PC-9 (cell line): ENCODE measurements at regions of chr5 and their contacts with region 1.

Region 1: GRCh38 chr5:54517174-54518092 is at the start of gene SNX18:
- DNase-seq: peak; percentile 72 to 88
- H3K4me3 ChIP-seq: peak within 1 kb of the TSS; percentile 72
- H3K27ac ChIP-seq: peak within 1 kb of the TSS; percentile 31; the same call in 1 of the 2 replicates
- H3K4me1 ChIP-seq: peaks cover 40% of the 10 kb centered on the region
- H3K27me3 ChIP-seq: no peaks in the 10 kb centered on the region
- CTCF ChIP-seq: peak; percentile 90
- total RNA-seq, gene SNX18: 9.7 and 13.1 TPM in 2 replicates

Region 2: GRCh38 chr5:53425598-53426511 is 1091.6 kb before region 1 on chr5:
- CTCF ChIA-PET with region 1: no interaction called
- POLR2A ChIA-PET with region 1: no interaction called
- intact Hi-C with region 1: no loop called
- DNase-seq: no peak
- H3K4me3 ChIP-seq: no peak overlapping the region
- H3K27ac ChIP-seq: no peak overlapping the region
- H3K4me1 ChIP-seq: 0 out of 2 replicates have a peak, but pooled peaks cover 6% of the 10 kb centered on the region
- H3K27me3 ChIP-seq: no peaks in the 10 kb centered on the region
- CTCF ChIP-seq: peak; percentile 45

Region 3: GRCh38 chr5:54700986-54701584 is 183.7 kb after region 1 on chr5:
- CTCF ChIA-PET with region 1: no interaction called
- POLR2A ChIA-PET with region 1: no interaction called
- intact Hi-C with region 1: loop called (anchors 1 kb)
- DNase-seq: peak; percentile 79 to 100
- H3K4me3 ChIP-seq: peak overlapping the region; percentile 30; the same call in 1 of the 2 replicates
- H3K27ac ChIP-seq: peak overlapping the region; percentile 90
- H3K4me1 ChIP-seq: peaks cover 44% of the 10 kb centered on the region
- H3K27me3 ChIP-seq: no peaks in the 10 kb centered on the region
- CTCF ChIP-seq: no peak

Region 4: GRCh38 chr5:54844905-54845566 is 327.6 kb after region 1 on chr5:
- CTCF ChIA-PET with region 1: interaction called, 7 read pairs
- POLR2A ChIA-PET with region 1: no interaction called
- intact Hi-C with region 1: loop called (anchors 1 kb)
- DNase-seq: peak in 1 of 2 experiments; percentile 42
- H3K4me3 ChIP-seq: no peak overlapping the region
- H3K27ac ChIP-seq: no peak overlapping the region
- H3K4me1 ChIP-seq: no peaks in the 10 kb centered on the region
- H3K27me3 ChIP-seq: no peaks in the 10 kb centered on the region
- CTCF ChIP-seq: peak; percentile 88

Region 5: DNA sequence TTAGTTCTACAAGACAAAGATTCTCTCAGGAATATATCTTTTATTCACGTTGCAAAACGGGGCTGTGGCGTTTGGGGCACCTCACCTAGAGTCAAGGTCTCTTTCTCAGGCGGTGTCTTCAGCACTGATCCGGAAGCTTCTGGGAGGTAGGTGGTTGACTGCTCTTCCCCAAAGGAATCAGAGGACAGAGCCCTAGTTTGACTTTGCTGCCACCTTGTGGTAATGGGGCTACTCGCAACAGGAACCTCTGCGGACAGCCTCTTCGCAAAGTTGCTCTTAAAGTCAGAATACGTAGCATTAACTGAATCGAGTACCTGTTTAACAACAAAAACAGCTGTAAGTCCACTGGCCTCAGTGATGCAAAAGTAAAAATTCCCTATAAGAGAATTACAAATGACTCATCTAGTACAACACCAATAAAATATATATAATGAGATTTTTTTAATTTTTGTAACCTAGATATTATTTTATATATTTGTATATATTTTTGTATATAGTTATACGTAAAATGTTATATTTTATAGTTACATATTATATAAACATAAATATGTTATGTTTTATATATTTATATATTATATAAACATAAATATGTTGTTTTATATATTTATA is 629.2 kb after region 1 on chr5:
- CTCF ChIA-PET with region 1: no interaction called
- POLR2A ChIA-PET with region 1: no interaction called
- intact Hi-C with region 1: loop called (anchors 1 kb)
- DNase-seq: peak; percentile 68 to 70
- H3K4me3 ChIP-seq: no peak overlapping the region
- H3K27ac ChIP-seq: no peak overlapping the region
- H3K4me1 ChIP-seq: no peaks in the 10 kb centered on the region
- H3K27me3 ChIP-seq: peaks cover 7% of the 10 kb centered on the region
- CTCF ChIP-seq: peak; percentile 92